ENCODE measurements at regions of chr11 and their contacts with region 1.

Region 1: GRCh38 chr11:94493281-94494125 is at the starts of genes ANKRD49 and MRE11:
- DNase-seq: peak; percentile 91 to 99 (median 95)
- ATAC-seq: peak; percentile 98
- H3K4me3 ChIP-seq: peak within 1 kb of the TSS; percentile 83
- H3K4me3 Mint-ChIP-seq: peak within 1 kb of the TSS; percentile 97
- H3K27ac ChIP-seq: peak within 1 kb of the TSS; percentile 65 to 86
- H3K27ac Mint-ChIP-seq: peak within 1 kb of the TSS; percentile 92
- H3K4me1 ChIP-seq: peaks cover 8% of the 10 kb centered on the region
- H3K4me1 Mint-ChIP-seq: peaks cover 54% of the 10 kb centered on the region
- H3K27me3 ChIP-seq: no peaks in the 10 kb centered on the region
- H3K27me3 Mint-ChIP-seq: no peaks in the 10 kb centered on the region
- CTCF ChIP-seq: no peak
- total RNA-seq, gene ANKRD49: 54.4 to 56.4 TPM
- total RNA-seq, gene MRE11: 17.0 to 18.6 TPM

Region 2: GRCh38 chr11:93123351-93123898 is 1370.1 kb before region 1 on chr11:
- CTCF ChIA-PET with region 1: no interaction called
- POLR2A ChIA-PET with region 1: no interaction called
- intact Hi-C with region 1: no loop called
- DNase-seq: no peak
- ATAC-seq: no peak
- H3K4me3 ChIP-seq: no peak overlapping the region
- H3K4me3 Mint-ChIP-seq: no peak overlapping the region
- H3K27ac ChIP-seq: no peak overlapping the region
- H3K27ac Mint-ChIP-seq: no peak overlapping the region
- H3K4me1 ChIP-seq: no peaks in the 10 kb centered on the region
- H3K4me1 Mint-ChIP-seq: no peaks in the 10 kb centered on the region
- H3K27me3 ChIP-seq: no peaks in the 10 kb centered on the region
- H3K27me3 Mint-ChIP-seq: peaks cover 6% of the 10 kb centered on the region
- CTCF ChIP-seq: no peak

Region 3: GRCh38 chr11:93197380-93198214 is 1295.9 kb before region 1 on chr11 and contains the start of gene SLC36A4:
- CTCF ChIA-PET with region 1: no interaction called
- POLR2A ChIA-PET with region 1: no interaction called
- intact Hi-C with region 1: loop called in 1 of 2 experiments (anchors 5 kb)
- DNase-seq: peak; percentile 76 to 95 (median 80)
- ATAC-seq: peak; percentile 88
- H3K4me3 ChIP-seq: peak within 1 kb of the TSS; percentile 78
- H3K4me3 Mint-ChIP-seq: peak within 1 kb of the TSS; percentile 94
- H3K27ac ChIP-seq: peak within 1 kb of the TSS; percentile 85 to 90
- H3K27ac Mint-ChIP-seq: peak within 1 kb of the TSS; percentile 97
- H3K4me1 ChIP-seq: peaks cover 6% of the 10 kb centered on the region
- H3K4me1 Mint-ChIP-seq: peaks cover 26% of the 10 kb centered on the region
- H3K27me3 ChIP-seq: no peaks in the 10 kb centered on the region
- H3K27me3 Mint-ChIP-seq: no peaks in the 10 kb centered on the region
- CTCF ChIP-seq: no peak
- total RNA-seq, gene SLC36A4: 15.9 to 16.4 TPM

Region 4: DNA sequence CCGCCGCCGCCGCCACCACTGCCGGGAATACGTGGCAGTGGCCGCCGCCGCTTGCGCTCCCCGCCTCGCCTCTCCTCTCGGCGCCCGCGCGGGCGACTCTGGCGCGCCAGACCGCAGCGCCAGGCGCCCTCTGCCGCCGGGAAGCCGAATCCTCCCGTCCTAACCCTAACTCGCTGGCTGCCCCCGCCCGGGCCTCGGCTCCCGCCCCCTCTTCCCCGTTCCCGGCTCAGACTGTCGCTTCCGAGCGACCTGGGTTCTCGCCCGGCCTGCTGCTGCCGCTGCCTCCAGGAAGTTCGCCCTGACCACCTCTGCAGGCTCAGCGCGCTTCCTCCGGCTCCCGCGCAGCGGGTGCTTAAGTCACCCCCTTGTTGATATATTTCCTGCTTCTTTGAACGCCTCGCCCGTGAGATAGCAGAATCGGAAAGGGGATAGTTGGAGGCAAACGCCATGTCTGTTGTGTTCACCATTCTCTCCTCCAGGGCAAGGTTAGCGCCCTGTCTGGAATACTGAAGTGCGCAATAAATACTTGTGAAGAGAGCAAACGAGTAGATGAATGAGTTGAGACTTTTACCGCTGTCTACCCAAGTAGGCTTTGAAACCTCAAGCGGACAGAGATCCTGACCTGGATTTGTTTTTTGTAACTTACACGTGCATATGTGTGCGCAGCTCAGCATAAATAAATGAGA is 950.1 kb before region 1 on chr11 and contains the start of gene SMCO4:
- CTCF ChIA-PET with region 1: no interaction called
- POLR2A ChIA-PET with region 1: no interaction called
- intact Hi-C with region 1: loop called in 1 of 2 experiments (anchors 5 kb)
- DNase-seq: peak; percentile 36 to 87 (median 58)
- ATAC-seq: peak; percentile 74
- H3K4me3 ChIP-seq: peak within 1 kb of the TSS; percentile 74
- H3K4me3 Mint-ChIP-seq: peak within 1 kb of the TSS; percentile 98
- H3K27ac ChIP-seq: peak within 1 kb of the TSS; percentile 2 to 43
- H3K27ac Mint-ChIP-seq: peak within 1 kb of the TSS; percentile 85
- H3K4me1 ChIP-seq: peaks cover 24% of the 10 kb centered on the region
- H3K4me1 Mint-ChIP-seq: peaks cover 28% of the 10 kb centered on the region
- H3K27me3 ChIP-seq: no peaks in the 10 kb centered on the region
- H3K27me3 Mint-ChIP-seq: no peaks in the 10 kb centered on the region
- CTCF ChIP-seq: peak; percentile 54
- total RNA-seq, gene SMCO4: 0.30 TPM in 1 of 2 experiments, not detected in the other

Region 5: GRCh38 chr11:93652161-93652597 is 841.3 kb before region 1 on chr11:
- CTCF ChIA-PET with region 1: no interaction called
- POLR2A ChIA-PET with region 1: no interaction called
- intact Hi-C with region 1: loop called in 1 of 2 experiments (anchors 10 kb)
- DNase-seq: peak in 5 of 14 experiments; percentile 19 to 63 (median 47)
- ATAC-seq: peak; percentile 17
- H3K4me3 ChIP-seq: no peak overlapping the region
- H3K4me3 Mint-ChIP-seq: no peak overlapping the region
- H3K27ac ChIP-seq: no peak overlapping the region
- H3K27ac Mint-ChIP-seq: no peak overlapping the region
- H3K4me1 ChIP-seq: peaks cover 5% of the 10 kb centered on the region
- H3K4me1 Mint-ChIP-seq: peaks cover 13% of the 10 kb centered on the region
- H3K27me3 ChIP-seq: no peaks in the 10 kb centered on the region
- H3K27me3 Mint-ChIP-seq: peaks cover 5% of the 10 kb centered on the region
- CTCF ChIP-seq: peak; percentile 83

Region 6: DNA sequence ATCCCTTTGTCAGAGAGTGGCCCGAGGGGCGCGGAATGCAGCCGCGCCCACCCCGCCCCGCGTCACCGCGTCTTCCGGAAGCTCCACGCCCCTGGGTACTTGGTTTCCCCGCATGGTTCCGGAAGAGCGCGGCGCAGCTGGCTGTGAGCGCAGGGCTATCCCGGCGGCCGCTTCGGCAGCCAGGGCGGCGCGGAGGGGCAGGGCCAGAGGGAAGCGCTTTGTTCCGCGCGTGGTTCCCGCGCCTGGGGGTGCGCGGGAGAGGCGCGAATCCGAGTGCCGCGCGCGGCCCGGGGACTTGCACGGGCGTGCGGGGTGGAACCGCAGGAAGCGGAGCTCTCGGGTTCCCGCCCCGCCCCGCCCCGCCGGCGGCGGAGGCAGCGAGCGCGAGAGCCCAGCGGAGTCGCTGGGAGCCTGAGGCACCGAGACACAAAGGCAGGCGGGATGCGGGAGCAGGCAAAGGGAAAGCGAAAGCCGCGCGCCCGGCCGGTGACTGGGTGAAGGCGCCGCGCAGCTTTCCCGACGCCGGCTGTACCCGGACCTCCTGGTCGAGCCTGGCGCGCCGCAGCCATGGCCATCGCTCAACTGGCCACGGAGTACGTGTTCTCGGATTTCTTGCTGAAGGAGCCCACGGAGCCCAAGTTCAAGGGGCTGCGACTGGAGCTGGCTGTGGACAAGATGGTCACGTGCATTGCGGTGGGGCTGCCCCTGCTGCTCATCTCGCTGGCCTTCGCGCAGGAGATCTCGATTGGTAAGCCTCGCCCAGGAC is 364.6 kb before region 1 on chr11 and contains the start of gene PANX1:
- CTCF ChIA-PET with region 1: no interaction called
- POLR2A ChIA-PET with region 1: interaction called, 5 read pairs
- intact Hi-C with region 1: loop called in 1 of 2 experiments (anchors 2 kb)
- DNase-seq: peak; percentile 42 to 93 (median 64)
- ATAC-seq: peak; percentile 81
- H3K4me3 ChIP-seq: peak within 1 kb of the TSS; percentile 91
- H3K4me3 Mint-ChIP-seq: peak within 1 kb of the TSS; percentile 93
- H3K27ac ChIP-seq: peak within 1 kb of the TSS; percentile 64 to 90
- H3K27ac Mint-ChIP-seq: peak within 1 kb of the TSS; percentile 90
- H3K4me1 ChIP-seq: peaks cover 47% of the 10 kb centered on the region
- H3K4me1 Mint-ChIP-seq: peaks cover 26% of the 10 kb centered on the region
- H3K27me3 ChIP-seq: no peaks in the 10 kb centered on the region
- H3K27me3 Mint-ChIP-seq: no peaks in the 10 kb centered on the region
- CTCF ChIP-seq: no peak
- total RNA-seq, gene PANX1: 4.8 to 4.9 TPM

Region 7: GRCh38 chr11:94543695-94544645 is 50.5 kb after region 1 on chr11 and contains the start of gene FUT4:
- CTCF ChIA-PET with region 1: no interaction called
- POLR2A ChIA-PET with region 1: interaction called, 7 read pairs
- intact Hi-C with region 1: loop called in 1 of 2 experiments (anchors 5 kb)
- DNase-seq: peak; percentile 46 to 84 (median 62)
- ATAC-seq: peak; percentile 79
- H3K4me3 ChIP-seq: peak within 1 kb of the TSS; percentile 82
- H3K4me3 Mint-ChIP-seq: peak within 1 kb of the TSS; percentile 99
- H3K27ac ChIP-seq: peak within 1 kb of the TSS; percentile 61 to 93
- H3K27ac Mint-ChIP-seq: peak within 1 kb of the TSS; percentile 95
- H3K4me1 ChIP-seq: peaks cover 33% of the 10 kb centered on the region
- H3K4me1 Mint-ChIP-seq: peaks cover 51% of the 10 kb centered on the region
- H3K27me3 ChIP-seq: no peaks in the 10 kb centered on the region
- H3K27me3 Mint-ChIP-seq: no peaks in the 10 kb centered on the region
- CTCF ChIP-seq: peak; percentile 5
- total RNA-seq, gene FUT4: 4.3 to 5.1 TPM

Measured in CD4-positive, alpha-beta T cell (primary cell).